Activated CD4-positive, alpha-beta memory T cell treated with anti-CD3 and anti-CD28 coated beads, Interleukin-2, amount 10 ng/mL, durations not matched to agents 7 days and 5 days (primary cell): ENCODE measurements at regions of chr3 and their contacts with region 1.

Region 1: GRCh38 chr3:160801386-160802118 is 45.5 kb downstream of the PPM1L start:
- DNase-seq: peak; percentile 72
- H3K4me3 Mint-ChIP-seq: peak overlapping the region; percentile 45
- H3K27ac Mint-ChIP-seq: peak overlapping the region; percentile 72
- H3K4me1 Mint-ChIP-seq: peaks cover 39% of the 10 kb centered on the region
- H3K27me3 Mint-ChIP-seq: peaks cover 8% of the 10 kb centered on the region

Region 2: DNA sequence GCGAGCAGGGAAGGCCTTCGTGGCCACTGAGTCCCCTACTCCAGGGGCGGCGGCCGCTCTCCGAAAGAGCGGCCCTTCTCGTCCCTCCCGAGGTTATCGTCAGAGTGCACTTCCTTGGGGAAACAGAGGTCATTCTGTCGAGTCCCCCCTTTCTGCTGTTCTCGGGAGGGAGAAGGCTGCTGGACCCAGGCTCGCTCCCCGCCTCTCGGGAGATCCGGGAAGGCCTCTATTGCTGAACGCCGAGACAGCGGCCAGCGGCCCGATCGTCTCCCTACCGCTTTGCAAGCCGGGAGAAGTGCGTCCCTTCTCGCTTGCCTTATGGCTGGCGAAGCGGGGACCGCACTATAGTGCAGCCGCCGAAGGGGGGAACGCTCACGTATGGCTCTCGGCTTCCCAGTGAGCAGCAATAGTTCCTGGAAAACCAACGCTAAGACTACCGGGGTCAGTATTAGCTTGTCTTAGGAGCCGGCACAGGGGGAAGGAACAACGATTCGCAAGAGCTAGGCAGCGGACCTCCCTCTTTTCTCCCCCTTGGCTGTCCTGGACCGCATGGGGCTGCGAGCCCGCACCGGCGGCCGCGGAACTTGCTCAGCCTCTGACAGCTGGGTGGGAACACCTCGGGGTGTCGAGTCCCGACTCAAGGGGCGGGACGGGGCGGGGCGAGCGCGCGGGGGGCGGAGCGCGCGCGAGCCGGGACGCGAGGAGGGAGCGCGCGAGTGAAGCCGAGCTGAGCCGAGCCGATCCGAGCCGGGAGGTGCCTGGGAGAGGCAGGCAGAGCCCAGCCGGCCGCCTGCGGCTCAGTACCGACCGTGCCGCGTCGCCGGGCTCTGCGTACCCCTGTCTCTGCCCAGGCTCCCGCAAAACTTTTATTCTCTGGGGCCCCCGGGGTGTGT is 46.5 kb before region 1 on chr3:
- CTCF ChIA-PET with region 1: interaction called, 4 read pairs
- POLR2A ChIA-PET with region 1: interaction called, 30 read pairs
- DNase-seq: peak; percentile 94
- H3K4me3 Mint-ChIP-seq: peak overlapping the region; percentile 98
- H3K27ac Mint-ChIP-seq: peak overlapping the region; percentile 84
- H3K4me1 Mint-ChIP-seq: peaks cover 31% of the 10 kb centered on the region
- H3K27me3 Mint-ChIP-seq: peaks cover 13% of the 10 kb centered on the region

Region 3: GRCh38 chr3:160837394-160837980 is 35.9 kb after region 1 on chr3:
- CTCF ChIA-PET with region 1: no interaction called
- POLR2A ChIA-PET with region 1: no interaction called
- DNase-seq: no peak
- H3K4me3 Mint-ChIP-seq: no peak overlapping the region
- H3K27ac Mint-ChIP-seq: no peak overlapping the region
- H3K4me1 Mint-ChIP-seq: peaks cover 5% of the 10 kb centered on the region
- H3K27me3 Mint-ChIP-seq: peaks cover 2% of the 10 kb centered on the region